ENCODE measurements at regions of chr2 and their contacts with region 1.

Region 1: GRCh38 chr2:199704358-199705238 is 146.4 kb downstream of the FTCDNL1 start:
- DNase-seq: peak; percentile 44
- H3K4me3 ChIP-seq: no peak overlapping the region
- H3K27ac ChIP-seq: no peak overlapping the region
- H3K4me1 ChIP-seq: no peaks in the 10 kb centered on the region
- H3K27me3 ChIP-seq: no peaks in the 10 kb centered on the region
- CTCF ChIP-seq: peak in 3 of 4 experiments; percentile 57 to 71 (median 69)
- POLR2A ChIP-seq: no peak

Region 2: GRCh38 chr2:199480966-199481365 is 223.6 kb before region 1 on chr2:
- intact Hi-C with region 1: no loop called
- DNase-seq: no peak
- H3K4me3 ChIP-seq: no peak overlapping the region
- H3K27ac ChIP-seq: no peak overlapping the region
- H3K4me1 ChIP-seq: no peaks in the 10 kb centered on the region
- H3K27me3 ChIP-seq: no peaks in the 10 kb centered on the region
- CTCF ChIP-seq: no peak
- POLR2A ChIP-seq: no peak

Region 3: GRCh38 chr2:199739413-199740110 is 35.0 kb after region 1 on chr2:
- intact Hi-C with region 1: loop called (anchors 2 kb)
- DNase-seq: peak; percentile 33
- H3K4me3 ChIP-seq: no peak overlapping the region
- H3K27ac ChIP-seq: no peak overlapping the region
- H3K4me1 ChIP-seq: peaks cover 10% of the 10 kb centered on the region
- H3K27me3 ChIP-seq: no peaks in the 10 kb centered on the region
- CTCF ChIP-seq: peak; percentile 70 to 93 (median 74)
- POLR2A ChIP-seq: no peak

Region 4: GRCh38 chr2:199798831-199799580 is 94.4 kb after region 1 on chr2:
- intact Hi-C with region 1: no loop called
- DNase-seq: no peak
- H3K4me3 ChIP-seq: no peak overlapping the region
- H3K27ac ChIP-seq: no peak overlapping the region
- H3K4me1 ChIP-seq: no peaks in the 10 kb centered on the region
- H3K27me3 ChIP-seq: no peaks in the 10 kb centered on the region
- CTCF ChIP-seq: no peak
- POLR2A ChIP-seq: no peak

Region 5: GRCh38 chr2:199861132-199861774 is 156.7 kb after region 1 on chr2:
- intact Hi-C with region 1: loop called (anchors 1 kb)
- DNase-seq: no peak
- H3K4me3 ChIP-seq: no peak overlapping the region
- H3K27ac ChIP-seq: no peak overlapping the region
- H3K4me1 ChIP-seq: no peaks in the 10 kb centered on the region
- H3K27me3 ChIP-seq: no peaks in the 10 kb centered on the region
- CTCF ChIP-seq: peak; percentile 22 to 74 (median 59)
- POLR2A ChIP-seq: no peak